ENCODE measurements at regions of chr2 and their contacts with region 1.

Region 1: DNA sequence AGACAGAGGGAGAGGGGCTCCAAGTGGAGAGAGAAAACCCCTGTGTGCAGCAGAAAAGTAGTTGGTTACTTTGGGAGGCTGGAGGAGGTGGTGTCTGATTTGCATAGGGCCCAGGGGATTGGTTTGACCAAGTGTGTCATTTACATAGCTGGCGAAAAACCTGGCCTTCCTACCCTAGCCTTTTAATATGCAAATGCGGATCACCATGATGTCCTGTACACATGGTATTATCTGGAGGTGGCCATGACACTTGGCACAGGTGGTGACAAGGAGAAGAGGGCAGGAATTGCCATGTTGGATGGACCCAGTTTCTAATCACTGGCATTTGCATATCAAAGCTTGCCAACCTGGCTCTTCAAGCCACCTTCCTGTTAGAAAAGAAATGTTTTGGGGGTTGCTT is 120.8 kb upstream of the CHAC2 start:
- DNase-seq: no peak
- ATAC-seq: no peak
- H3K4me3 ChIP-seq: no peak overlapping the region
- H3K27ac ChIP-seq: no peak overlapping the region
- H3K4me1 ChIP-seq: no peaks in the 10 kb centered on the region
- H3K27me3 ChIP-seq: no peaks in the 10 kb centered on the region
- CTCF ChIP-seq: no peak
- POLR2A ChIP-seq: no peak
- RAD21 ChIP-seq: no peak

Region 2: DNA sequence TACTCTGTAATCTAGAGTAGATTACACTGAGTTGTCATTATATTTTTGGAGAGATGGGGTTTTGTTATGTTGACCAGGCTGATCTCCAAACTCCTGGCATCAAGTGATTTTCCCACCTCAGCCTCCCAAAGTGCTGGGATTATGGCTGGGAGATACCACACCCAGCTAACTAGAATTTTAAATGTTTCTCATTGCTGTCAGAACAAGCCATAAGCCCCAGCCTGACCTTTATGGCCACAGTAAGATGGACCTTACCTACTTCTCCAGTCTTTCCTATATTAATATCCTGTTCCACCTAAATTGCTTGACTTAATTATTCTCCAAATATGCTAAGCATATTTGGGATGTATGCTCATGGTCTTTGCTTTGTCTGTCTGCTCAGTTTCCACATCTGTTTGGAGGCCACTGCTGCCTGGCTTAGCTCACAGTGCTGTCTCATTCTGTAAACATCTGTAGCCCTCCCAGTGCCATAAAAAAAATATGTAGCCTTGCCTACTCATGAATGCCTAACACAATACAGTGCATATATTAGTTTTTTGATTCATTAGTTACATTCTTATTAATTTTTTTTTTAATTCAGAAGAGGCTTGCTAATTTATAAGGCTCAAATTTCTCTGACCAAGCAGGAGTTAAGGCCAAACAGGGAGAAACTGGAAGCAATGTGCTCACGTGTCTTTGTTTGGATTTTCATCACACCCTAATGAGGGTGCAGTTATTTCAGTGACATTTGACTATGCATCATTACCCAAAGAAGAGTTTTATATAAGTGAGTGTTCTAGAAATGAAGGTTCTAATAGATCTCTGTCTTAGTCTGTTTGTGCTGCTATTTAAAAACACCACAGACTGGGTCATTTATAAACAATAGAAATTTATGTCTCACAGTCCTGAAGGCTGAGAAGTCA is 369.3 kb after region 1 on chr2:
- CTCF ChIA-PET with region 1: no interaction called
- POLR2A ChIA-PET with region 1: interaction called, 19 read pairs
- dilution Hi-C with region 1: no loop called
- in situ Hi-C with region 1: no loop called
- intact Hi-C with region 1: no loop called
- DNase-seq: peak; percentile 88
- ATAC-seq: peak; percentile 97
- H3K4me3 ChIP-seq: no peak overlapping the region
- H3K27ac ChIP-seq: no peak overlapping the region; the same call in 1 of the 2 replicates
- H3K4me1 ChIP-seq: peaks cover 4% of the 10 kb centered on the region; the same call in 1 of the 2 replicates
- H3K27me3 ChIP-seq: no peaks in the 10 kb centered on the region
- CTCF ChIP-seq: no peak
- POLR2A ChIP-seq: no peak
- RAD21 ChIP-seq: no peak

Measured in IMR-90 (cell line).